Activated CD4-positive, alpha-beta memory T cell treated with anti-CD3 and anti-CD28 coated beads, Interleukin-2, amount 10 ng/mL, durations not matched to agents 7 days and 5 days (primary cell): ENCODE measurements at regions of chr2 and their contacts with region 1.

Region 1: GRCh38 chr2:18402-19271 is 27.7 kb downstream of the FAM110C start:
- DNase-seq: no peak
- H3K4me3 Mint-ChIP-seq: no peak overlapping the region
- H3K27ac Mint-ChIP-seq: no peak overlapping the region
- H3K4me1 Mint-ChIP-seq: peaks cover 14% of the 10 kb centered on the region
- H3K27me3 Mint-ChIP-seq: peaks cover 8% of the 10 kb centered on the region

Region 2: DNA sequence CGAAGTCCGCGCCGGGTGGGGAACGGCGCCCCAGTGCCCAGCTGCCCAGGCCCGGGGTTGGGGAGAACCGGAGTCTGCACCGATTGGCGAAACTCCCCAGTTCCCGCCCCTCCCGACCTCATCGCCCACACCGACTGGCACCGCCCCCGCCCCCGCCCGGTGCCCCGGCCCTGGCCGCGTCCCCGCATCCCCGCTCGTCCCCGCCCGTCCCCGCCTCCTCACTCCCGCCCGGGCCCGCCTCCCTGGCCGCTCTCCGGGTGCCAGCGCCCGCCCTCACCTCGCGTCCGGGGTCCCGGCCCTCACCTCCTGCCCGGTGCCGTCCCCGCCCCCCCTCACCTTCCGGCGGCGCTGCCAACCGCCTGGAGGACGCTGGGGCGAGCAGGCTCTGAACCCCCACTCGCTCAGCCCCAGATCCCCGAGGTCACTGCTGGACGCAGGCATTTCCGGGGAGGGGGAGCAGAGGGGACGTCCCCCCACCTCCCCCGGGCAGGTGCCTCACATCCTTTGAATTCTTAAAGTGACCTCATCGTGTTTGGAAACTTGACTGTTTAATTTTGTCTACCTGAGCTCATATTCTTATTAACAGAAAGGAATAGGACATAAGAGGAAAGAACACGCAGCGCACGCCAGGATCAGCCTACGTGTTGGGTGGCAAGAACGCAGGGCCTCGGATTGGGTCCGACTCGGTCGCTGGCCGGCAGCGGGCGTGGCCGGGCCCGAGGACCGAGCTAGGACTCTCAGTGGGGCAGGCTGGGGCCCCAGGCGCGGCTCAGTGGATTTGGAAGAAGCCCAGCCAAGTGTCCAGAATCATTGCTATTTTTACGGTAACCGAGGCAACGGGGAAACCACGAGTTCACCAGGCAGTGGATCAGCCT is 28.1 kb after region 1 on chr2 and contains the start of gene FAM110C:
- CTCF ChIA-PET with region 1: interaction called, 11 read pairs
- POLR2A ChIA-PET with region 1: no interaction called
- DNase-seq: peak; percentile 64
- H3K4me3 Mint-ChIP-seq: peak within 1 kb of the TSS; percentile 71
- H3K27ac Mint-ChIP-seq: peak within 1 kb of the TSS; percentile 12
- H3K4me1 Mint-ChIP-seq: peaks cover 34% of the 10 kb centered on the region
- H3K27me3 Mint-ChIP-seq: peaks cover 48% of the 10 kb centered on the region
- total RNA-seq, gene FAM110C: 4.8 to 5.1 TPM

Region 3: GRCh38 chr2:141611-142010 is 123.0 kb after region 1 on chr2:
- CTCF ChIA-PET with region 1: interaction called, 20 read pairs
- POLR2A ChIA-PET with region 1: no interaction called
- DNase-seq: no peak
- H3K4me3 Mint-ChIP-seq: no peak overlapping the region
- H3K27ac Mint-ChIP-seq: no peak overlapping the region
- H3K4me1 Mint-ChIP-seq: no peaks in the 10 kb centered on the region
- H3K27me3 Mint-ChIP-seq: peaks cover 29% of the 10 kb centered on the region